A549 (cell line): ENCODE measurements at regions of chr10 and their contacts with region 1.

Region 1: DNA sequence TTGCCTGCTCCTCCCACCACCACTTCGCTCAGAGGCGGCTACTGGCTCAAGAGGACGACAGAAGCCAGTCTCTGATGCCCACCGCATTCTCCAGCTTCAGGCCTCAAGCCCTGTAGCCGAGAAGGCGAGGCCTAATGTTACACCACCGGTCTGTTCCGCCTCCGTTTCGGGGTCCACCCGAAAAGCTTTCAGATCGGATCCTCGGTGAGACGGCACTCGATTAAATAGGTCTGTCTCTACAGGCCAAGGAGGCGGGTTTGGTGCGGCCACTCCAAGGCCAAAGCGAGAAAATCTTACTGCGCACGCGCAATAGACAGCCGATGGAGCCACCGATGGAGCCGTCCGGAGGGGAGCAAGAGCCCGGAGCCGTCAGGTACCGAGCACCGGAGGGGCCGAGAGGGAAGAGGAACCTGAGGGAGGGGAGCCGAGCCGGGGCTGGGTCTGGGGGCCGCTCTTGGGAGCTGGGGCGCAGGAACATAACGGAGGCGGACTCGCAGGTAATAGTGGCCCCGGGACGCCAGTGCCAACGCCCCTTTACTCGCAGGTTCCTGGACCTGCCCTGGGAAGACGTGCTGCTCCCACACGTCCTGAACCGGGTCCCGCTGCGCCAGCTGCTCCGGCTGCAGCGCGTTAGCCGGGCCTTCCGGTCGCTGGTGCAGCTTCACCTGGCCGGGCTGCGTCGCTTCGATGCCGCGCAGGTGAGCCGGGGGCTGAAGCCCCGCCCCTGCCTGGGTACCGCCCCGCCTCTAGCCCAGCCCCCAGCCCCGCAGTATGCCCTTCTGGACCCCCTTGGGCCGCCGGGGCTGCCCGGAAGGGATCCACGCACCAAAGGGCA is at the start of gene FBXL15:
- DNase-seq: peak; percentile 93 to 98
- ATAC-seq: peak; percentile 52 to 82
- H3K4me3 ChIP-seq: peak within 1 kb of the TSS; percentile 57
- H3K27ac ChIP-seq: peak within 1 kb of the TSS; percentile 86 to 90
- H3K4me1 ChIP-seq: peaks cover 25% of the 10 kb centered on the region
- CTCF ChIP-seq: no peak
- EP300 ChIP-seq: no peak
- POLR2A ChIP-seq: peak; percentile 56
- RAD21 ChIP-seq: peak in 1 of 2 experiments; percentile 7; a peak in 1 of 5 replicates
- polyA plus RNA-seq, gene FBXL15: 3.7 and 4.8 TPM in 2 replicates

Region 2: DNA sequence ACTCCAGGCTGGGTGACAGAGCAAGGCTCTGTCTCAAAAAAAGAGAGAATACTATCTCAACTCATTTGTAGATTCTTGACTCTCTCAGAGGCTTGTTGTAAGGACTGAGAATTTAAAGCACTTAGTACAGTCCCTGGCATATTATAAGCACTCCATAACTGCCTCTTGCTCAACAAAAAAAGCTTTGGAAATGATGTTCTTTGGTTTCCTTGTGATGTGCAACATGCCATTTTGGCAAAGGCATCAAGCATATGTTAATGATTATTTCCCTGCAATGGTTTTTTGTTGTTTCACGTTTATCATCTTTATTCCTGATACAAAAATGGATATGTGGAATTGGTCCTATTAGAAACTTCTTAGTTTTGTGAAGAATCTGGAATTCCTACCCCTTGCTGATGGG is 253.2 kb before region 1 on chr10:
- CTCF ChIA-PET with region 1: interaction called, 33 read pairs
- POLR2A ChIA-PET with region 1: interaction called, 5 read pairs
- DNase-seq: no peak
- ATAC-seq: 0 out of 6 replicates have a peak, but pooled peaks of 1 of the 2 experiments have one; percentile 12
- H3K4me3 ChIP-seq: no peak overlapping the region
- H3K27ac ChIP-seq: no peak overlapping the region
- H3K4me1 ChIP-seq: peaks cover 3% of the 10 kb centered on the region; the same call in 1 of the 3 replicates
- CTCF ChIP-seq: no peak
- EP300 ChIP-seq: no peak
- POLR2A ChIP-seq: no peak
- RAD21 ChIP-seq: no peak

Region 3: DNA sequence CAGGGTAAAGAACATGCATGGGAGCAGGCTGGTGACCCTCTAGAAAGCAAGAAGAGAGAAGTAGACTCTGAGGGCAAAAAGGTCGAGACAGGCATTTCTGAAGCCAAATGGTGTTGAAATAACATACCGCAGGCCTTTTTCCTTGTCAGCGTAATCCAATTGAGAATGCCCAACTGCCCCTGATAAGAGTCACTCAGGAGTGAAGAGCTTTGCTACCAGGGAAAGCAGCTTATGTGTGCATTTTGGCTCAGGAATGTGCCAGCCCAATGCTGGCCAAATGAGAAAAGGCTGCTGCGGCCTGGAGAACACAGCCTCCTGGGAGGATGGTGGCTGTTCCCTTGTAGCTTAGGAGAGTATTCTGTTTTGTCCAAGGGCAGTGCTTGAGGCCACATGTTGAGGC is 86.9 kb before region 1 on chr10:
- CTCF ChIA-PET with region 1: no interaction called
- POLR2A ChIA-PET with region 1: no interaction called
- DNase-seq: no peak
- ATAC-seq: no peak
- H3K4me3 ChIP-seq: no peak overlapping the region
- H3K27ac ChIP-seq: no peak overlapping the region
- H3K4me1 ChIP-seq: no peaks in the 10 kb centered on the region
- CTCF ChIP-seq: no peak
- EP300 ChIP-seq: no peak
- POLR2A ChIP-seq: no peak
- RAD21 ChIP-seq: no peak

Region 4: GRCh38 chr10:102394079-102394800 is 26.8 kb before region 1 on chr10:
- CTCF ChIA-PET with region 1: interaction called, 337 read pairs
- POLR2A ChIA-PET with region 1: interaction called, 3 read pairs
- DNase-seq: peak; percentile 95 to 98
- ATAC-seq: peak; percentile 82 to 90
- H3K4me3 ChIP-seq: peak overlapping the region; percentile 56
- H3K27ac ChIP-seq: peak overlapping the region; percentile 68 to 91
- H3K4me1 ChIP-seq: peaks cover 22% of the 10 kb centered on the region; the same call in 2 of the 3 replicates
- CTCF ChIP-seq: peak; percentile 96
- EP300 ChIP-seq: no peak; a peak in 1 of 5 replicates
- POLR2A ChIP-seq: no peak
- RAD21 ChIP-seq: peak in 1 of 2 experiments; percentile 85; a peak in 4 of 5 replicates

Region 5: DNA sequence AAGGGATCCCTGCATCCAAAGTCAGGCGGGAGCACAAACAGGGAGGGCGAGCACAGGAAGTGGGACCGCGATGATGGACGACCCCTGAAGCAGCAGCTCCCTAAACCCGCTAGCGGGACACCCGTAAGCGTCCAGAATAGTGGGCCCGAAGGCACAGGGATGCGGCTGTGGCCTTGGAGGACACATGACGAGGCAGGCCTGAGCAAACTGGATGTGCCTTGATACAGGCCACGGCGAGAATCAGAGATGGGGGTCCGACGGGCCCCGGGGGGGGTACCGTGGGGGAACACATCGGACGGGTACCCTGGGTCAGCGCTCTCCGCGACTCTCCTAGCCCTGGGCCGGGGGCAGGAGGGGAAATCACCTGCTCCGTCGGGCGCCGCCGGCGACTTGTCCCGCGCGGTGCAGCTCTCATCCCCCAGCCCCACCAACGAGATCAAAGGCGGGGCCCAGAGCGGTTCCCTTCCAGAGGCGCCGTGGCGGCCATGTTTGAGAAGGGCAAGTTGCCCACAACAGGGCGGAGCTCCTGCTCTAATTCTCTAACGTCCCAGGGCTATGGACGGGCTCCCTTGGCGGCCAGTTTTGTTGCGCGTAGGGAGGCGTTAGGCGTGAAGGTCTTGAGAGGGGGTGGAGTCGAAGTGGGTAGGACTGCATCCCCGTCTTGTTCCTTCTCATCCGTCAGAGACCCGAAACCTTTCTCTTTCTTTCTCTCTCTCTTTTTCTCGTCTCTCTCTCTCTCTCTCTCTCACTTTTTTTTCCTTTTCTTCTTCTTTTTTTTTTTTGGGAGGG is 11.3 kb after region 1 on chr10 and contains the start of gene CUEDC2:
- CTCF ChIA-PET with region 1: interaction called, 82 read pairs
- POLR2A ChIA-PET with region 1: interaction called, 15 read pairs
- DNase-seq: peak; percentile 96 to 97
- ATAC-seq: peak; percentile 95 to 96
- H3K4me3 ChIP-seq: peak within 1 kb of the TSS; percentile 87
- H3K27ac ChIP-seq: peak within 1 kb of the TSS; percentile 92 to 95
- H3K4me1 ChIP-seq: peaks cover 14% of the 10 kb centered on the region
- CTCF ChIP-seq: no peak
- EP300 ChIP-seq: no peak
- POLR2A ChIP-seq: peak; percentile 63; the same call in 1 of the 2 replicates
- RAD21 ChIP-seq: no peak; a peak in 1 of 5 replicates
- polyA plus RNA-seq, gene CUEDC2: 42.5 and 43.7 TPM in 2 replicates

Region 6: DNA sequence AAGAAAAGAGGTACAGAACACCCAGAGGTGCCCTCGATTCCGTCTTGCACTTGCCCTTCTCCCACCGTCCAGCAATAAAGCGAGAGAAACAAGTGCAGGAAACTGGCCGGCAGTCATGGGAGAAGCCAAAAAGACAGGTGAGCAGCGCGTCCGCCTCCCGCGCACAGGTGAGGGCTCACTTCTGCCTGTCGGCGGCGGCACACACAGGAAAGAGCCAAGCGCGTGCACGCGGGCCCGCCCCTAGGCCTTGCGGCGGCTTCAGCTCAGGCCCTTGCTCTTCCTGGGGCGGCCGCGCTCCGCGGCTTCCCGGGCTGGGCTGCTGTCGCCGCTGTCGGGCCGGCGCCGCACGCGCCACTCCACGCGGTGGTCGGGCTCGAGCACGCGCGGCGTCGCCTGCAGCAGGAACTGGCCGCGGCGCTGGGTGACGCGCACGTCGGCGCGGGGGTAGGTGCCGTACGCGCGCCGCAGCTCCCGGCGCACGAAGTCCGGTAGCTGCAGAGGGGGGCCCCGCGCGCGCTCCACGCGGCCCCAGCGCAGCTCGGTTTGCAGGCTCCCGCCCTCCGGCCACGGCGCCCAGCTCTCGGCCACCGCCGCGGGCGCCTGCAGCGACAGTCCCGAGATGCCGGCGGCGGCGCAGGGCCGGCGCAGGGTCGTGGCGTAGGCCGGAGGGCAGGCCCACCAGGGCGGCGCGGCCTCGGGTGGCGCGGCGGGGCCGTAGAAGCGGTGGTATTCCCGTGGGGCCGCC is 29.3 kb after region 1 on chr10:
- CTCF ChIA-PET with region 1: interaction called, 10 read pairs
- POLR2A ChIA-PET with region 1: interaction called, 4 read pairs
- DNase-seq: peak; percentile 74 to 79
- ATAC-seq: peak; percentile 78 to 79
- H3K4me3 ChIP-seq: peak overlapping the region; percentile 97
- H3K27ac ChIP-seq: peak overlapping the region; percentile 89 to 95
- H3K4me1 ChIP-seq: peaks cover 44% of the 10 kb centered on the region
- CTCF ChIP-seq: no peak
- EP300 ChIP-seq: no peak
- POLR2A ChIP-seq: peak; percentile 75
- RAD21 ChIP-seq: no peak

Region 7: GRCh38 chr10:102467971-102468438 is 47.0 kb after region 1 on chr10:
- CTCF ChIA-PET with region 1: interaction called, 17 read pairs
- POLR2A ChIA-PET with region 1: no interaction called
- DNase-seq: no peak
- ATAC-seq: peak in 1 of 2 experiments; percentile 34; a peak in 1 of 6 replicates
- H3K4me3 ChIP-seq: no peak overlapping the region
- H3K27ac ChIP-seq: no peak overlapping the region
- H3K4me1 ChIP-seq: no peaks in the 10 kb centered on the region
- CTCF ChIP-seq: no peak
- EP300 ChIP-seq: no peak
- POLR2A ChIP-seq: no peak
- RAD21 ChIP-seq: no peak

Region 8: DNA sequence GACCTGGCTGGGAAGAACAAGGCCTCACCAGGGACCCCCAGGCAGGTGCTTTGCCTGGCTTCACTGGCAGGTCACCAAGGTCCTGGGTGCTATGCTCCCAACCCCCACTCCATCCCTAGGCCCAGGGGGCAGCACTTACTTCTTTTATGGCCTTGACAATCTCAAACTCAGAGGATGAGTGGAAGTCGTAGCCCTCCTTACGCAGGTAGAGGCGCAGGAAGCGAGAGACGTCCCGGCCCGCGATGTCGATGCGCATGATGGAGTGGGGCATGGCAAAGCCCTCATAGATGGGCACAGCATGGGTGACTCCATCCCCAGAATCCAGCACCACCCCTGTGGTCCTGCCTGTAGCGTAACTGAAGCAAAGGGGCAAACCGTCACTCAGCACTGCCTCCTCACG is 63.0 kb after region 1 on chr10:
- CTCF ChIA-PET with region 1: interaction called, 54 read pairs
- POLR2A ChIA-PET with region 1: interaction called, 3 read pairs
- DNase-seq: no peak
- ATAC-seq: no peak
- H3K4me3 ChIP-seq: no peak overlapping the region
- H3K27ac ChIP-seq: no peak overlapping the region
- H3K4me1 ChIP-seq: no peaks in the 10 kb centered on the region
- CTCF ChIP-seq: no peak
- EP300 ChIP-seq: no peak
- POLR2A ChIP-seq: no peak
- RAD21 ChIP-seq: no peak